ENCODE measurements at regions of chr6 and their contacts with region 1.

Region 1: DNA sequence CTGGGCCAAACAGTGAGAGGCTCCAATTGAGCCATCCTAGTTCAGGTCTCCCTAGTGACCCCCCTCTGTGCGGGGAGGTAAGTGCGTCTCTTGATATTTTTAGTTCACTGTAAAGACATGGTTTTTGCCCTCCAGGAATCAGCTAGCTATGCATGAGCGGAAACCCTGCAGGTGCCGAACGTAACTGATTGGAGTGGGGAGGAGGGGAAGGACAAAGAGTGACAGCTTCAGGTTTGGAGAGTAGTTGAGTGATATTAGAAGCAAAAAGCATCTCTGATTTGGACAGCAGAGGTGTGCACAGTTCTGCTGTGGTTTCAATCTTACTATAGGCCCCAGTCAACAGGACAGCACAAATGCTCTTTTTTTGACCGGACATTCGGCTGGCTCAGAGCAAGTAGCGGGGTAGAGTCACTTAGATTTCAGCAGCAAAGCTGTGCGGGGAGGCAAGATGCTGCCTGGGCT is 31.8 kb downstream of the TBC1D7 start:
- DNase-seq: peak; percentile 44
- ATAC-seq: peak; percentile 19
- H3K4me3 ChIP-seq: no peak overlapping the region
- H3K4me3 Mint-ChIP-seq: peak overlapping the region; percentile 53
- H3K27ac ChIP-seq: no peak overlapping the region
- H3K27ac Mint-ChIP-seq: peak overlapping the region; percentile 68
- H3K4me1 ChIP-seq: peaks cover 15 to 26% of the 10 kb centered on the region in 2 donors
- H3K4me1 Mint-ChIP-seq: peaks cover 70% of the 10 kb centered on the region
- H3K27me3 ChIP-seq: no peaks in the 10 kb centered on the region
- H3K27me3 Mint-ChIP-seq: no peaks in the 10 kb centered on the region
- CTCF ChIP-seq: peak; percentile 40

Region 2: GRCh38 chr6:13261464-13261994 is 35.0 kb before region 1 on chr6:
- CTCF ChIA-PET with region 1: no interaction called
- POLR2A ChIA-PET with region 1: interaction called, 7 read pairs
- intact Hi-C with region 1: loop called (anchors 1 kb)
- DNase-seq: peak; percentile 91
- ATAC-seq: peak; percentile 76
- H3K4me3 ChIP-seq: peak overlapping the region; percentile 25 to 55 (median 36)
- H3K4me3 Mint-ChIP-seq: peak overlapping the region; percentile 75
- H3K27ac ChIP-seq: peak overlapping the region; percentile 93
- H3K27ac Mint-ChIP-seq: peak overlapping the region; percentile 86
- H3K4me1 ChIP-seq: peaks cover 73 to 87% of the 10 kb centered on the region in 2 donors
- H3K4me1 Mint-ChIP-seq: peaks cover 89% of the 10 kb centered on the region
- H3K27me3 ChIP-seq: no peaks in the 10 kb centered on the region
- H3K27me3 Mint-ChIP-seq: no peaks in the 10 kb centered on the region
- CTCF ChIP-seq: no peak

Region 3: GRCh38 chr6:13286181-13286580 is 10.4 kb before region 1 on chr6:
- CTCF ChIA-PET with region 1: interaction called, 6 read pairs
- POLR2A ChIA-PET with region 1: interaction called, 5 read pairs
- intact Hi-C with region 1: loop called (anchors 1 kb)
- DNase-seq: peak; percentile 61
- ATAC-seq: peak; percentile 74
- H3K4me3 ChIP-seq: no peak overlapping the region
- H3K4me3 Mint-ChIP-seq: peak overlapping the region; percentile 49
- H3K27ac ChIP-seq: peak overlapping the region; percentile 4 to 69
- H3K27ac Mint-ChIP-seq: peak overlapping the region; percentile 75
- H3K4me1 ChIP-seq: peaks cover 31 to 32% of the 10 kb centered on the region in 2 donors
- H3K4me1 Mint-ChIP-seq: peaks cover 74% of the 10 kb centered on the region
- H3K27me3 ChIP-seq: no peaks in the 10 kb centered on the region
- H3K27me3 Mint-ChIP-seq: no peaks in the 10 kb centered on the region
- CTCF ChIP-seq: no peak

Region 4: GRCh38 chr6:13531945-13532344 is 235.4 kb after region 1 on chr6:
- CTCF ChIA-PET with region 1: no interaction called
- POLR2A ChIA-PET with region 1: no interaction called
- intact Hi-C with region 1: no loop called
- DNase-seq: no peak
- ATAC-seq: no peak
- H3K4me3 ChIP-seq: no peak overlapping the region
- H3K4me3 Mint-ChIP-seq: no peak overlapping the region
- H3K27ac ChIP-seq: no peak overlapping the region
- H3K27ac Mint-ChIP-seq: no peak overlapping the region
- H3K4me1 ChIP-seq: peaks cover 8% of the 10 kb centered on the region in 2 donors
- H3K4me1 Mint-ChIP-seq: peaks cover 13% of the 10 kb centered on the region
- H3K27me3 ChIP-seq: no peaks in the 10 kb centered on the region
- H3K27me3 Mint-ChIP-seq: no peaks in the 10 kb centered on the region
- CTCF ChIP-seq: no peak